ENCODE measurements at regions of chrX and their contacts with region 1.

Region 1: DNA sequence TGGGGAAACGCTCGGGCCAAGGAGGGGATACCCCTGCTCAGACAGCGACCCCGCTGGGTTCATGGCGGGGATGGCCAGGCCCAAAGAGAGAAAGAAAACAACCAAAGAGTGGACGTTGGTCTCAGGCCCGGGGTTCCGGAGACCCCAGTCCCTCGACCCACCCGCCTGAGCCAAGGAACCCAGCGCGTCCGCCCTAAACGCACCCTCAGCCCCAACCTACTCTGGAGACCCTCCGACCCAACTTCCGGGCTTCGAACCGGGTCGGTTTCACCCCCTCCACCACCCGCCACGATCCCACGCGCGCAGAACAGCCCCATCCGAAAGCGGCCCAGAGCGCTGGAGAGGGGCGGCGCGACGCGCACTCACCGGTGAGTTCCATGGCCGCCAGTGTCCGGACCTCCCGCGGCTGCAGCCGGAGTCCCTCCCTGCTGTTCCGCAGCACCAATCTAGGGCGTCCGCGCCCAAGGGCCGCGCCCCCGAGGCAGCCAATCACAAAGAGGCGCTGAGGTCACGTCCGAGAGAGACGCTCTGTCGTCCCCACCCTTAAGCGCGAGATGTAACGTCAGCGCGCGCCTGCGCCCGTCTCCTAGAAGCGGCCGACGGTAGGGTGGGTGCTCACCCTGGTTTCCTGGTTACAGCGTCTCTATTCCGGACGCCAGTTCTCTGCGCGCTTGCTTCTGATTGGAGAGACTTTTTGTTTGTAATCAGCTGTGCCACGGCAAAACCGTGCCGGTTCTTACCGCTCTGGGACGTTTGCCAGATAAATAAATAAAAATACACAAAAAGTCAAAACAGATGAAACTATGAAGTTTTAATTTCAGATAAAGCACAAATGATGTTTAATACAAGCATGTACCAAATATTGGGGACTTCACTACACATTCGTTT is at the start of gene PIGA:
- DNase-seq: peak; percentile 71 to 95 (median 91)
- ATAC-seq: peak; percentile 92
- H3K4me3 ChIP-seq: peak within 1 kb of the TSS; percentile 92
- H3K4me3 Mint-ChIP-seq: peak within 1 kb of the TSS; percentile 87 to 93 (median 90)
- H3K27ac ChIP-seq: peak within 1 kb of the TSS; percentile 84
- H3K27ac Mint-ChIP-seq: peak within 1 kb of the TSS; percentile 75 to 96 (median 93)
- H3K4me1 ChIP-seq: peaks cover 0 to 6% of the 10 kb centered on the region in 2 donors
- H3K4me1 Mint-ChIP-seq: peaks cover 0 to 20% (median 18%) of the 10 kb centered on the region in 7 donors
- H3K27me3 ChIP-seq: no peaks in the 10 kb centered on the region
- H3K27me3 Mint-ChIP-seq: peaks cover 0 to 15% (median 9%) of the 10 kb centered on the region in 5 donors
- total RNA-seq, gene PIGA: 23.8 to 102 (median 27.8) TPM

Region 2: GRCh38 chrX:13653022-13653693 is 1682.2 kb before region 1 on chrX and contains the start of gene TCEANC:
- CTCF ChIA-PET with region 1: no interaction called
- POLR2A ChIA-PET with region 1: no interaction called
- intact Hi-C with region 1: loop called in 1 of 2 experiments (anchors 1 kb)
- DNase-seq: peak; percentile 77 to 96 (median 93)
- ATAC-seq: peak; percentile 97
- H3K4me3 ChIP-seq: peak within 1 kb of the TSS; percentile 93
- H3K4me3 Mint-ChIP-seq: peak within 1 kb of the TSS; percentile 79 to 96 (median 93)
- H3K27ac ChIP-seq: peak within 1 kb of the TSS; percentile 93
- H3K27ac Mint-ChIP-seq: peak within 1 kb of the TSS; percentile 91 to 98 (median 96)
- H3K4me1 ChIP-seq: peaks cover 15 to 16% of the 10 kb centered on the region in 2 donors
- H3K4me1 Mint-ChIP-seq: peaks cover 0 to 39% (median 24%) of the 10 kb centered on the region in 7 donors
- H3K27me3 ChIP-seq: no peaks in the 10 kb centered on the region
- H3K27me3 Mint-ChIP-seq: no peaks in the 10 kb centered on the region
- total RNA-seq, gene TCEANC: 5.0 to 17.5 (median 11.4) TPM

Region 3: DNA sequence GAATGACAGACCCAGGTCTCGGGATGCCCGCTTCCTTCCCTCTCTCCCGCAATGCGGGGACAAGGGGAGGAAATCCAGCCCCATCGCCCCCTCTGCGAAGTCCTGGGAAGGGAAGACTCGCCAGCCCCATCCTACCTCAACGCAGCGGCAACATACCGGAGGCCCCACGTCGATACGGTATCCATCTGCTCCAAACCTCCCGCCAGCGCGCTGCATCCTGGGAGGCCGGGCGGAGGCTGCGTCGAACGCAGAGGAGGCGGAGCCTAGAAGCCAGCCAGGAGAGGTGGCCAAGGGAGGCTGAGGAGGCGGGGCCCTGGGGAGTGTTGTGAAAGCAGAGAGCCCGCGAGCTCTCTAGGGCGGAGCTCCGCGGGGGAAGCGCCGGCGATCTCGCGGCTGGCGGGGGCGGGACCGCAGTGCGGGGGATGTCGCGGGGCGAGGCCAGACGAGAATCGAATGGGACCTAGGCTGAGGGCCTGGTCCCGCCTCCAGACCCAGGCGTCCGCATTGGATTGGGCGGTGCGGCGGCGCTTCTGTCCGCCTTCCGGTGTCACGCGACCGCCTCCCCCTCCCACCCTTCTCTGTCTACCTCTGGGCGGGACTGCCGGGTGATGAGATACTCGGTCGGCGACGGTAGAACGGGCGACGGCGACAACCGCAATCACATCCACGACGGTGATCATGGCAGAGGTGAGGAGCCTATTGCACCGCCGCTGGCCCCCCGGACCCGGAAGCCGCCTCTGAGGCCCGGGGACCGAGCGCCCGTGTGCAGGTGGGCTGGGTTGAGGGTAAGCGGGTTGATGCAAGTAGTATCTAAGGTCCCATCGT is 462.3 kb before region 1 on chrX and contains the starts of genes FANCB and MOSPD2:
- CTCF ChIA-PET with region 1: no interaction called
- POLR2A ChIA-PET with region 1: interaction called, 5 read pairs
- intact Hi-C with region 1: loop called (anchors 1 kb)
- DNase-seq: peak; percentile 83 to 96 (median 93)
- ATAC-seq: peak; percentile 95
- H3K4me3 ChIP-seq: peak within 1 kb of the TSS; percentile 76
- H3K4me3 Mint-ChIP-seq: peak within 1 kb of the TSS; percentile 82 to 94 (median 88)
- H3K27ac ChIP-seq: peak within 1 kb of the TSS; percentile 76
- H3K27ac Mint-ChIP-seq: peak within 1 kb of the TSS; percentile 75 to 93 (median 88)
- H3K4me1 ChIP-seq: peaks cover 4 to 9% of the 10 kb centered on the region in 2 donors
- H3K4me1 Mint-ChIP-seq: peaks cover 0 to 34% (median 14%) of the 10 kb centered on the region in 7 donors
- H3K27me3 ChIP-seq: no peaks in the 10 kb centered on the region
- H3K27me3 Mint-ChIP-seq: no peaks in the 10 kb centered on the region
- total RNA-seq, gene FANCB: 3.3 to 8.3 (median 4.0) TPM
- total RNA-seq, gene MOSPD2: 7.1 to 15.7 (median 13.4) TPM

Region 4: GRCh38 chrX:15202454-15203143 is 132.8 kb before region 1 on chrX:
- CTCF ChIA-PET with region 1: no interaction called
- POLR2A ChIA-PET with region 1: no interaction called
- intact Hi-C with region 1: loop called in 1 of 2 experiments (anchors 2 kb)
- DNase-seq: no peak
- ATAC-seq: no peak
- H3K4me3 ChIP-seq: no peak overlapping the region
- H3K4me3 Mint-ChIP-seq: peak overlapping the region in 1 of 10 donors; percentile 38
- H3K27ac ChIP-seq: no peak overlapping the region
- H3K27ac Mint-ChIP-seq: peak overlapping the region in 2 of 9 donors; percentile 76 to 84
- H3K4me1 ChIP-seq: peaks cover 0 to 14% of the 10 kb centered on the region in 2 donors
- H3K4me1 Mint-ChIP-seq: peaks cover 9 to 47% (median 24%) of the 10 kb centered on the region in 7 donors
- H3K27me3 ChIP-seq: no peaks in the 10 kb centered on the region
- H3K27me3 Mint-ChIP-seq: peaks cover 0 to 7% (median 0%) of the 10 kb centered on the region in 5 donors

Region 5: DNA sequence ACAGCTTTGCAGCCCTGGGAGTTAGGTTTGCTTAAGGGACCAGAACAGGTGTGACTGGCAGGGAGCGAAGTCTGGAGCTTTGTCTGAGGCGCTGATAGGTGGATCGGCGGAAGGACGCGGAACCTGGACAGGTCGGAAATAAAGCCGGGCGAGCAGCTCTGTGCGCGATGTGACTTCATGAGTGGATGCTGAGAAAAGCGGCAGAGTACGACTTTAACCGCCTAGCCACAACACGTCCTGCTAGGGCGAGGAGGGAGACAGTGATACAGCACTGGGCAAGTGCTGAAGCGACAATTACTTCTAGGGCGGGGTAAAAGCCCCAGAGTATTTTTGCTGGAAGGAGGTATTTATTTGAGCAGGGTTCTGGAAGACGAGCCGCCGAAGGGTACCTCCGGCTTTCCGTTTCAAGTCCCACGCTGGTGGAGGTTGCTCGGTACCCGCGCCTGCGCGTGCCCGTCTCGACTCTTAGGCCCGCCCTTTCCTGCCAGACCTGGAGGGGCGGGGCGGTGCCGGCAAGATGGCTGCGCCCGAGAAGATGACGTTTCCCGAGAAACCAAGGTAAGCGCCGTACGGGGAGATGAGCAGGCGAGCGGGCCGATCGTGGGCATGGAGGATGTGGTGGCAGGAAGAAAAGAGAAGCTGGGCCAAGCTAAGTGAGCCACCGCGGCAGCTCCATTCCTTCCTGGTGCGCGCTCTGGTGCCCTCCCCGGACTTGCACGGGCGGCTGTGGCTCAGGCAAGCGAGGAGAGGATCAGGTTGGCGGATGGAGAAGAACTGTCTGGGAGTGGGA is 454.8 kb after region 1 on chrX and contains the start of gene ZRSR2:
- CTCF ChIA-PET with region 1: no interaction called
- POLR2A ChIA-PET with region 1: interaction called, 5 read pairs
- intact Hi-C with region 1: loop called (anchors 1 kb)
- DNase-seq: peak; percentile 68 to 95 (median 91)
- ATAC-seq: peak; percentile 95
- H3K4me3 ChIP-seq: peak within 1 kb of the TSS; percentile 92
- H3K4me3 Mint-ChIP-seq: peak within 1 kb of the TSS in 1 of 10 donors; percentile 48
- H3K27ac ChIP-seq: peak within 1 kb of the TSS; percentile 93
- H3K27ac Mint-ChIP-seq: no peak within 1 kb of the TSS
- H3K4me1 ChIP-seq: peaks cover 9 to 10% of the 10 kb centered on the region in 2 donors
- H3K4me1 Mint-ChIP-seq: peaks cover 0 to 36% (median 24%) of the 10 kb centered on the region in 7 donors
- H3K27me3 ChIP-seq: no peaks in the 10 kb centered on the region
- H3K27me3 Mint-ChIP-seq: no peaks in the 10 kb centered on the region
- total RNA-seq, gene ZRSR2: 20.8 to 31.7 (median 25.4) TPM

Region 6: GRCh38 chrX:16719334-16720084 is 1384.1 kb after region 1 on chrX and contains the start of gene SYAP1:
- CTCF ChIA-PET with region 1: no interaction called
- POLR2A ChIA-PET with region 1: interaction called, 4 read pairs
- intact Hi-C with region 1: loop called (anchors 1 to 2 kb)
- DNase-seq: peak; percentile 85 to 100 (median 96)
- ATAC-seq: peak; percentile 96
- H3K4me3 ChIP-seq: peak within 1 kb of the TSS; percentile 95
- H3K4me3 Mint-ChIP-seq: peak within 1 kb of the TSS; percentile 88 to 98 (median 94)
- H3K27ac ChIP-seq: peak within 1 kb of the TSS; percentile 99
- H3K27ac Mint-ChIP-seq: peak within 1 kb of the TSS; percentile 92 to 100 (median 99)
- H3K4me1 ChIP-seq: peaks cover 0 to 10% of the 10 kb centered on the region in 2 donors
- H3K4me1 Mint-ChIP-seq: peaks cover 2 to 63% (median 39%) of the 10 kb centered on the region in 7 donors
- H3K27me3 ChIP-seq: no peaks in the 10 kb centered on the region
- H3K27me3 Mint-ChIP-seq: no peaks in the 10 kb centered on the region
- total RNA-seq, gene SYAP1: 15.4 to 36.9 (median 15.6) TPM

Region 7: GRCh38 chrX:16946361-16946964 is 1611.1 kb after region 1 on chrX and contains the start of gene REPS2:
- CTCF ChIA-PET with region 1: no interaction called
- POLR2A ChIA-PET with region 1: no interaction called
- intact Hi-C with region 1: loop called in 1 of 2 experiments (anchors 10 kb)
- DNase-seq: peak; percentile 51 to 82 (median 70)
- ATAC-seq: peak; percentile 98
- H3K4me3 ChIP-seq: peak within 1 kb of the TSS; percentile 39
- H3K4me3 Mint-ChIP-seq: peak within 1 kb of the TSS; percentile 77 to 88 (median 84)
- H3K27ac ChIP-seq: peak within 1 kb of the TSS; percentile 7
- H3K27ac Mint-ChIP-seq: peak within 1 kb of the TSS in 7 of 9 donors; percentile 51 to 86 (median 73)
- H3K4me1 ChIP-seq: no peaks in the 10 kb centered on the region
- H3K4me1 Mint-ChIP-seq: peaks cover 0 to 4% (median 0%) of the 10 kb centered on the region in 7 donors
- H3K27me3 ChIP-seq: no peaks in the 10 kb centered on the region
- H3K27me3 Mint-ChIP-seq: peaks cover 3 to 25% (median 6%) of the 10 kb centered on the region in 5 donors
- total RNA-seq, gene REPS2: 1.1 to 6.2 (median 1.9) TPM in 4 of 5 experiments, not detected in the other